Head of caudate nucleus (tissue), 42 donors: ENCODE measurements at regions of chr13 and their contacts with region 1.

Region 1: DNA sequence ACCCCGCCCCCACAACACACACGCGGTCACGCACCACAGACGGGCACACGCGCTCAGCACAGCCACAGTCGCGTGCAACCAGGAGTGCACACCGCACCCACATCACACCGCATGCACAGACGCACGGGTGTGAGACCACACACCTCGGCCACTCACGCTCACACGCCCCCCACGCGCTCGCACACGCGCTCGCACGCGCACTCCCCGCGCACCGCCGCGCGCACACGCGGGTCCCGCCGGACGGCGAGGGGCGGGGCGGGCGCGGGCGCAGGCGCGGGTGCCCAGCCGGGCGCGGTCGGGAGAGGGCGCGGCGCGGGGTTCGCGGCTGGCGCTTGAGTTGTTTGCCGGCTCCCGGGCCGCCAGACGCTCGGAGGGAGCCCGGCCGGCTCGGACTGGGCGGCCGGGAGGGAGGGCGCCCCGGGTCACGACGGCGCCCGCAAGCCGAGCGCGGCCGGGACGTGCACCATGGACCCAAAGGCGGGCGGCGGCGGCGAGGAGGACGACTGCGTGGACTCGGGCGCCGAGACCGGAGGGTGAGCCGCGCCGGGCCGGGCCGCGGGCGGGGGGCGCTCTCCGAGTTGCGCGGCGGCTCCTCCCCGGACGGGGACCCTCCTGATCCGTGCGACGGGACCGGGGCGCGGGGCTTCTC is at the start of gene FAM124A:
- DNase-seq: peak in 40 of 42 donors; percentile 42 to 88 (median 74)

Region 2: DNA sequence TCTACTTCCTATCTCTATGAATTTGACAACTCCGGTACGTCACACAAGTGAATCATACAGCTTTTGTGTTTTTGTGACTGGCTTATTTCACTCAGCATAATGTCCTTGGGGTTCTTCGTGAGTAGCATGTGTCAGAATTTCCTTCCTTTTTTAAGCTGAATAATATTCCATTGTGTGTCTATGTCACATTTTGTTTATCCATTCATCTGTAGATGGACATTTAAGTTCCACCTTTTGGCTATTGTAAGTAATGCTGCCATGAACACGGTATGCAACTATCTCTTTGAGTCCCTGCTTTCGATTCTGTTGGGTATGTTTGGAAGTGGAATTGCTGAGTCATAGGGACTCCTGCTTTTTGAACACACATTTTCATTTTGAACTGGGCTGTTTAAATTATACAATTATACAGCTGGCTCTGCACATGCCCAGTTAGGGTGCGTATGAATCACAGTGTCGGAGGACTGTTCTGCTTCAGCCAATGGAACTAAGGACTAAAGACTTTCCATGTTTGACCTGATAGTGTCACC is 68.1 kb before region 1 on chr13:
- intact Hi-C with region 1: loop called (anchors 5 kb)
- DNase-seq: no peak

Region 3: DNA sequence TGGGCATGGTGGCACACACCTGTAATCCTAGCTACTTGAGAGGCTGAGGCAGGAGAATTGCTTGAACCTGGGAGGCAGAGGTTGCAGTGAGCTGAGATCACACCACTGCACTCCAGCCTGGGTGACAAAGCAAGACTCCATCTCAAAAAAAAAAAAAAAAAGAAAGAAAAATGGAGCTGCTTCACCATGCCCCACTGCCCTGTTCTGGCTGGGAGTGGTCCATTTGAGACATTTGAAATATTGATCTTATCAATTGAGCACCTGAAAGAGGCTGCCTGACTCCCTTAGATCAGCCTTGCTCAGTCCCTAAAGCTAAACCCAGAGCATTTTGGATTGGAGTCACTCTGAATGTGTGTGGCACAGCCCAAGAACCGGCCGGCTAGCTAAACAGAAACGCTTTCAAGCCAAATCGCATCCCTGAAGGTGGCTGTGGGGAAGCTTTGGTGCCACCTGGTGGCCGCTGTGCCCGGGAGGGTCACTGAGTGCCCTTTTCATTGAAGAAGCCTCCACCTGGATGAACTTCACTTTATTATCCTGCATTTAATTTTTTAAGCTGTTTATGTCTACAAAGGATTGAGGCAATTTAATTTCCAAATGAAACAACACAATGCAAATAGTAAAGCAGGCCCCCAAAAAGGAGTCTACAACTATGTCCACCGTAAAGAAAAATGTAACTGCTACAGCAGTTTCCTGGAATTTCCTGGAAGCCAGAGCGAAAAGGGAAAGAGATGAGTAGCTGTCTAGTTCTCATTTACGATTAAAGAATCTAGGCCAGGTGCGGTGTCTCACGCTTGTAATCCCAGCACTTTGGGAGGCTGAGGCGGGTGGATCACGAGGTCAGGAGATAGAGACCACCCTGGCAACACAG is 64.2 kb after region 1 on chr13:
- intact Hi-C with region 1: loop called (anchors 5 kb)
- DNase-seq: peak; percentile 72 to 96 (median 90)

Region 4: GRCh38 chr13:51599444-51600176 is 377.4 kb after region 1 on chr13:
- intact Hi-C with region 1: no loop called
- DNase-seq: no peak